Dorsolateral prefrontal cortex (tissue), 120 donors: ENCODE measurements at regions of chr12 and their contacts with region 1.

Region 1: GRCh38 chr12:123478762-123479161 is 20.8 kb downstream of the SNRNP35 start:
- DNase-seq: peak; percentile 14 to 90 (median 84)
- H3K4me3 ChIP-seq: peak overlapping the region in 53 of 59 donors; percentile 8 to 65 (median 37)
- H3K27ac ChIP-seq: peak overlapping the region; percentile 91 to 100 (median 99)
- H3K27me3 ChIP-seq: no peaks in the 10 kb centered on the region
- CTCF ChIP-seq: peak in 4 of 56 donors; percentile 6 to 17 (median 16)

Region 2: DNA sequence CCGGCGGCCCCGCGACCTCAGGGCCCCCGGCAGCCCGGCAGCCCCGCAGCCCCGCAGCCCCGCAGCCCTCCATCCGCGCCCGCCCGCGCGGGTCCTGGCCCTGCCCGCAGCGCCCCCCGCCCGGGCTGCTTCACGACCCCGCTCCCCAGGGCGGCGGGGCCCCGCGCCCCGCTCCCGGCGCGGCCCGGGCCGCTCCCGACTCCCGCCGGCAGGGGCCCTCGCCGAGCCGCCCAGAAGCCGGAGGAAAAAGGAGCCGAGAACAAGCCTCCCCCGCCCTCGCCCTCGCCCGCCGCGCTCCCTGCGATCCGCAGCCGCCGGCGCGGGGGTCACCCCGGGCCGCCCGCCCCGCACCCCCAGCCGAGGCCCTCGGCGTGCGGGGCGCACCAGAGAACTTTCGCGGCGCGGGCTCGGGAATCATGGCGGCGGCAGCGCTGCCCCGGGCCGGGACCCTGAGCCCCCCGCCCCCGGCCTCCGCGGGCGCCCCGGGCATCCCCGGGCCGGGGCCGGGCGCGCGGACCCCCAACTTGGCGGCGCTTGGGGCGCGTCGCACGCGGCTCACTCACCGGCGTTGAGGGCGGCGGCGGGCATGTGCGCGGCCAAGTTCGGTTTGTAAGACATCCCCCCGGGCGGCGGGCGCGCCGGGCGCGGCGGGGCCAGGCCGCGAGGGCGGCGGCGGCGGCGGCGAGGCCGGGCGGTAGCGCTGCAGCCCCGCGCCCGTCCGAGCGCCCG is 207.6 kb before region 1 on chr12:
- intact Hi-C with region 1: loop called in 1 of 2 experiments (anchors 10 kb)
- DNase-seq: peak in 9 of 10 donors; percentile 56 to 83 (median 68)
- H3K4me3 ChIP-seq: peak overlapping the region; percentile 50 to 87 (median 73)
- H3K27ac ChIP-seq: peak overlapping the region in 56 of 59 donors; percentile 88 to 99 (median 98)
- H3K27me3 ChIP-seq: no peaks in the 10 kb centered on the region
- CTCF ChIP-seq: peak in 39 of 56 donors; percentile 5 to 74 (median 47)

Region 3: DNA sequence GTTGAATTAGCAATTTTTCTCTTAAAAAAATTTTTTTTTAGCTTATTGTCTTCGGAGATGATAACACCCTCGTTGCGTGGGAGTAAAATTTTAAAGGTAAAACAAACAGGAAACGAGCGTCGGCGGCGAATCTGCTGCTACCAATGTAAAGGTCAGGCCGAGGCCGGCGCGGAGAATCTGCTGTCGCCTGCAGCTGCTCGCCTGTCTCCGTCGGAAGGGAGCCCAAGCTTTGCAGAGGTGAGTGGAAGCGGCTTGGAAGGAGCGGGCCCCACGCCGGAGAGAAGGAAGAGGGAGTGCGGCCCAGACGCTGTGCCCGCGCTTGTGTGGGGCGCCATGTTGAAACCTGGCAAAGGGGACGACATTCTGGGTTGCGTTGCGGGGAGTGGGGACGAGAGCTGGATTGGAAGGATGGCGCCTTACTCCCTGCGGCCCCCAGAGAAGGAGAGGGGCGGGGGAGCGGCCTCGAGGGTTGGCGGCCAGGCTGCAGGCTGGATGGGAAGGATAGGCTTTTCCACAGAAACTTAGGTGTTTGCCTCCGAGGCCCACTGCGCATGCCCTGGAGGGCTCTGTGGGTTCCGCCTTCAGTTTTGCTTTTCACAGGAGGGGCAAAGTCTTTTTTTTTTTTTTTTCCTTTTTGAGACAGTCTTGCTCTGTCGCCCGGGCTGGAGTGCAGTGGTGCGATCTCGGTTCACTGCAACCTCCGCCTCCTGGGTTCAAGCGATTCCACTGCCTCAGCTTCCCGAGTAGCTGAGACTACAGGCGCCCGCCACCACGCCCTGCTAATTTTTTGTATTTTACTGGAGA is 20.6 kb before region 1 on chr12 and contains the start of gene SNRNP35:
- intact Hi-C with region 1: loop called in 1 of 2 experiments (anchors 2 kb)
- DNase-seq: peak; percentile 65 to 83 (median 77)
- H3K4me3 ChIP-seq: peak within 1 kb of the TSS; percentile 63 to 97 (median 83)
- H3K27ac ChIP-seq: peak within 1 kb of the TSS; percentile 94 to 100 (median 99)
- H3K27me3 ChIP-seq: no peaks in the 10 kb centered on the region
- CTCF ChIP-seq: peak in 13 of 56 donors; percentile 2 to 38 (median 11)
- total RNA-seq, gene SNRNP35: 18.2 to 41.5 (median 27.9) TPM

Region 4: GRCh38 chr12:123533672-123534643 is 55.2 kb after region 1 on chr12 and contains the start of gene RILPL1:
- intact Hi-C with region 1: loop called (anchors 2 to 5 kb)
- DNase-seq: peak; percentile 36 to 78 (median 46)
- H3K4me3 ChIP-seq: peak within 1 kb of the TSS; percentile 68 to 94 (median 81)
- H3K27ac ChIP-seq: peak within 1 kb of the TSS; percentile 58 to 97 (median 94)
- H3K27me3 ChIP-seq: no peaks in the 10 kb centered on the region
- CTCF ChIP-seq: peak in 47 of 56 donors; percentile 1 to 71 (median 34)
- total RNA-seq, gene RILPL1: 26.8 to 64.9 (median 37.5) TPM